Left lung (tissue), 14 donors: ENCODE measurements at regions of chr10 and their contacts with region 1.

Region 1: GRCh38 chr10:13787015-13787421 is 200.3 kb downstream of the PRPF18 start:
- DNase-seq: peak in 1 of 4 donors; percentile 50
- ATAC-seq: peak; percentile 37
- H3K4me3 ChIP-seq: no peak overlapping the region
- H3K27ac ChIP-seq: peak overlapping the region; percentile 9 to 63
- H3K4me1 ChIP-seq: peaks cover 18 to 27% of the 10 kb centered on the region in 2 donors
- H3K27me3 ChIP-seq: no peaks in the 10 kb centered on the region
- CTCF ChIP-seq: no peak

Region 2: DNA sequence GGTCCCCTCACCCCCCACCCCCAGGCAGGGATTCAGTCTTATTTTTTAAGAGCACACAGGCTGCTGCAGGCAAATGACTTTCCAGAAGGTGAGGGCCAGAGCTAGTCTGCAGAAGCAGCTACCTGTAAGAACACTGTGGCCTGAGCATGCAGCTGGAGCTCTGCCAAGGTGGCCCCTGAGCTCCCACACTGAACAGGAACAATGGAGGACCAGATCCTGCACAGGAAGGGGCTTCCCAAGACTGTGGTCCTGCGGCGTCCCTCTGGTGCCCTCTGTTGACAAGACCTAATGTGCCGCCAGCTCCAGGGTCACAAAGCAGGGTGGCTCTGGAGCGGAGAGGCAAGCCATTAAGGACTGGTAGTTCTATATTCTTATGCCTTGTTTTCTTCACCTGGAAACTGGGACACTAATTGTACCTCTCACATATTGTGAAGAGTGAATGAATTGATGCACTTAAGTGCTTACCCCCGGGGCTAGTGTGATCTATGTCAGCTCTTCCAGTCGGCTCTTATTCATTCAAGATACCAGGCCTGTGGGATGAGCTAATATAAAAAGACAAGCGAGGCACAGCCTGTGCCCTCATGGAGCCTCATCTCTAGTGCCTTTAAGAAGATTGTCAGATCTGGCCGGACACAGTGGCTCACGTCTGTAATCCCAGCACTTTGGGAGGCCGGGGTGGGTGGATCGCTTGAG is 250.2 kb before region 1 on chr10:
- intact Hi-C with region 1: no loop called
- DNase-seq: peak; percentile 29 to 74 (median 56)
- ATAC-seq: peak; percentile 87
- H3K4me3 ChIP-seq: no peak overlapping the region
- H3K27ac ChIP-seq: no peak overlapping the region
- H3K4me1 ChIP-seq: no peaks in the 10 kb centered on the region
- H3K27me3 ChIP-seq: peaks cover 0 to 15% of the 10 kb centered on the region in 2 donors
- CTCF ChIP-seq: peak; percentile 28 to 47

Region 3: DNA sequence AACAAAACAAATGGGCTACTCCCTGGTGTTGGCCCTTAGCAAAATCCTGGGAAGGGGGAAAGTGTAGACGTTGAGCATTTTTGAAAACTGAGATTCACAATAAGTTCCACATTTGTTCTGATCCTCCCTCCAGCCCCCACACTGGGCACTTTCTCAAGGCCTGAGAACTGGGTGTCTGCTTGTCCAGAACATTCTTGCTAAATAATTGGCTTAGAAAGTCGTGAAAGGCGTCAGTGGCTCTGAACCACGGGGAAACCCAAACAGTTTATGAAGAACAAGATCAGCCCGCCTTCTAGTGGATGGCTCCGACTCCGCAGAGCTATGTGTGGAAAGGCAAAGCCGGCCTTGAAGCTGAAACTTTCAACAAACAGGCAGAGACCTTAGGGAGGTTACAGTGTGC is 169.8 kb after region 1 on chr10:
- intact Hi-C with region 1: loop called in 1 of 2 experiments (anchors 10 kb)
- DNase-seq: peak in 3 of 4 donors; percentile 45 to 82 (median 69)
- ATAC-seq: peak; percentile 78
- H3K4me3 ChIP-seq: no peak overlapping the region
- H3K27ac ChIP-seq: peak overlapping the region; percentile 4 to 20
- H3K4me1 ChIP-seq: no peaks in the 10 kb centered on the region
- H3K27me3 ChIP-seq: no peaks in the 10 kb centered on the region
- CTCF ChIP-seq: peak in 1 of 2 donors; percentile 36

Region 4: GRCh38 chr10:14093730-14094484 is 306.9 kb after region 1 on chr10:
- intact Hi-C with region 1: loop called in 1 of 2 experiments (anchors 5 kb)
- DNase-seq: peak in 1 of 4 donors; percentile 56
- ATAC-seq: peak; percentile 60
- H3K4me3 ChIP-seq: no peak overlapping the region
- H3K27ac ChIP-seq: no peak overlapping the region
- H3K4me1 ChIP-seq: peaks cover 0 to 4% of the 10 kb centered on the region in 2 donors
- H3K27me3 ChIP-seq: no peaks in the 10 kb centered on the region
- CTCF ChIP-seq: peak; percentile 29 to 31